Activated B cell treated with CpG ODN at 0.5 μM for 24 hours (primary cell): ENCODE measurements at regions of chr3 and their contacts with region 1.

Region 1: DNA sequence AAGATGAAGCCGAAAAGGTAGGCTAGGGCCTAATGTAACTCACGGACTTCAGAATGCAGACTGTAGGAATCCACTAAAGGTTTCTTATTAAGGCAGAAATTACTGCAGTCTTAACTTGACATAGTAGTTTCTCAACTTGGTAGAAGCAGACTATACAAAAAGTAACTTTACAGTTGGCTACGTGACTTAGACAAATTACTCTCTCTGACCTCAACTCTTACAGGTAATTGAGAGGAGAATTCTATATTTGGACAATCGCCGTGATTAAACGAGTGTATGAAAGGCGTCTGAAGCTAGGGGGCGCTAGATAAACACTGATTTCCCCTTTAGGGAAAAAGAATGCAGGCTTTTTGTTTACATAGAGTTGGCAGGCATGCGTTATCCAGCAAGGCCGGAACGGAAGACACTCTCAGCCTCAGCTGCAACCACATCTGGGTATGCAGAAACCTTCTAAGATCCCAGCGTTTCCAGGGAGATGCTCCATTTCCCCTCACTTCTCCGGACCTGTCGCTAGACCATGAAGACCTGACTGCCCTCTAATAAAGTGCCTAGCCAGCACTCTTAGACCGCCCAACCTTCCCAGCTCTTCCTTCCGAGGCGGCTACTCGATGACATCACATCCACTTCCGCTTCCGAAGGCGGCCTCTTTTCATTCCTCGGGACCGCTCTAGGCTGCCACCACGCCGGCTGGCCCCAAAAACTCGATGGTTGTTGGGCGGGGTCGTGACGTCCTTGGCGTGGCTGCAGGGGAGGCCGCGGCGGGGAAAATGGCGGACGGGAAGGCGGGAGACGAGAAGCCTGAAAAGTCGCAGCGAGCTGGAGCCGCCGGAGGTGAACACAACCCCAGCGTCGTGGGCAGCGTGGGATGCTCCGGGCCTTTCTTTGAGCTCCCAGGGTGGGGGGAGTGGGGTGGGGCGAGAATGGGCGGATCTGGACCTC is at the start of gene PCNP:
- DNase-seq: peak; percentile 97
- ATAC-seq: peak; percentile 85
- H3K4me3 Mint-ChIP-seq: peak within 1 kb of the TSS; percentile 99
- H3K27ac Mint-ChIP-seq: peak within 1 kb of the TSS; percentile 96
- H3K4me1 Mint-ChIP-seq: peaks cover 45% of the 10 kb centered on the region
- H3K27me3 Mint-ChIP-seq: no peaks in the 10 kb centered on the region
- CTCF ChIP-seq: no peak
- total RNA-seq, gene PCNP: 149 TPM in 2 replicates

Region 2: GRCh38 chr3:100260685-100261484 is 1312.8 kb before region 1 on chr3 and contains the start of gene TBC1D23:
- CTCF ChIA-PET with region 1: no interaction called
- POLR2A ChIA-PET with region 1: no interaction called
- intact Hi-C with region 1: loop called (anchors 2 kb)
- DNase-seq: peak; percentile 93
- ATAC-seq: peak; percentile 100
- H3K4me3 Mint-ChIP-seq: peak within 1 kb of the TSS; percentile 93
- H3K27ac Mint-ChIP-seq: peak within 1 kb of the TSS; percentile 96
- H3K4me1 Mint-ChIP-seq: peaks cover 43% of the 10 kb centered on the region
- H3K27me3 Mint-ChIP-seq: no peaks in the 10 kb centered on the region
- CTCF ChIP-seq: no peak
- total RNA-seq, gene TBC1D23: 27.2 and 27.7 TPM in 2 replicates

Region 3: DNA sequence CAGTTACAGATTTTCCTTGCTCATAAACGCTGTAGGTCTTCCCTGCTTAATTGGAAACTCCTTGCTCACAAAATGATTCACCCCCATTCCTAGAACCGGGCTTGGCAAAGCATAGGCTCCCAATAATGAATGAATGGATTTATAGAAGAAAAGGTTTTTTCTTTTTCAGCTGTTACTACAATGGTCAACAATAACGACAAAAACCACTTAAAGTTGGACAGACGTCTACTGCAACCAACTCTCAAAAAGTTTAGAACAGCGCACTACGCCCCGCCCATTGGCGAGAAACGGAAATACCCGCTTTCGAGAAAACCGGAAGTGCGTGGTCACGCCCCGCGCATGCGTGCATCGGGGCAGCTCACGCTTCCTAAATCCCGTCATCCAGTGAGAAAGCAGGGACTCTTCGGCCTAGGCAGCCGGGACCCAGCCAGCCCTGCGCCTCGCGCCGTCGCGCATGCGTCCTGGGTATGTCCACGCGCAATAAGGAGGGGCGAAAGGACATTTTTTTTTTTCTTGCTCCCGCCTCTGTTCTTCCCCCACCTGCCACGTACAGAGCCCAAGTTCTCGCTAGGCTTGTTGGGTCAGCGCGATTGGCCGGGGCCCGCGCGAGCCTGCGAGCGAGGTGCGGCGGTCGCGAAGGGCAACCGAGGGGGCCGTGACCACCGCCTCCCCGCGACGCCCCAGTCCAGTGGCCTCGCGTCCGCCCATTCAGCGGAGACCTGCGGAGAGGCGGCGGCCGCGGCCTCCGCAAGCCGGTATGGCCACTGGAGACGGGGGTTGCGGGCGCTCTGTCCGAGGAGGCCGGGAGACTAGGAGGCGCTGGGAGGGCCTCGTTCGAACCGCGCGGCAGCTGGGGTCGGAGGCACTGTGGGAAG is 864.5 kb before region 1 on chr3 and contains the start of gene TFG:
- CTCF ChIA-PET with region 1: no interaction called
- POLR2A ChIA-PET with region 1: interaction called, 4 read pairs
- intact Hi-C with region 1: loop called (anchors 1 kb)
- DNase-seq: peak; percentile 97
- ATAC-seq: peak; percentile 90
- H3K4me3 Mint-ChIP-seq: peak within 1 kb of the TSS; percentile 88
- H3K27ac Mint-ChIP-seq: peak within 1 kb of the TSS; percentile 92
- H3K4me1 Mint-ChIP-seq: peaks cover 40% of the 10 kb centered on the region
- H3K27me3 Mint-ChIP-seq: peaks cover 17% of the 10 kb centered on the region
- CTCF ChIP-seq: no peak
- total RNA-seq, gene TFG: 42.5 and 44.5 TPM in 2 replicates

Region 4: GRCh38 chr3:101512646-101513418 is 60.9 kb before region 1 on chr3 and contains the start of gene SENP7:
- CTCF ChIA-PET with region 1: no interaction called
- POLR2A ChIA-PET with region 1: interaction called, 31 read pairs
- intact Hi-C with region 1: loop called (anchors 1 kb)
- DNase-seq: peak; percentile 74
- ATAC-seq: peak; percentile 72
- H3K4me3 Mint-ChIP-seq: peak within 1 kb of the TSS; percentile 98
- H3K27ac Mint-ChIP-seq: peak within 1 kb of the TSS; percentile 99
- H3K4me1 Mint-ChIP-seq: peaks cover 35% of the 10 kb centered on the region
- H3K27me3 Mint-ChIP-seq: no peaks in the 10 kb centered on the region
- CTCF ChIP-seq: no peak
- total RNA-seq, gene SENP7: 18.6 and 22.1 TPM in 2 replicates

Region 5: GRCh38 chr3:101635954-101636798 is 62.5 kb after region 1 on chr3:
- CTCF ChIA-PET with region 1: interaction called, 3 read pairs
- POLR2A ChIA-PET with region 1: no interaction called
- intact Hi-C with region 1: loop called (anchors 1 kb)
- DNase-seq: peak; percentile 27
- ATAC-seq: peak; percentile 76
- H3K4me3 Mint-ChIP-seq: no peak overlapping the region
- H3K27ac Mint-ChIP-seq: no peak overlapping the region
- H3K4me1 Mint-ChIP-seq: peaks cover 2% of the 10 kb centered on the region
- H3K27me3 Mint-ChIP-seq: no peaks in the 10 kb centered on the region
- CTCF ChIP-seq: no peak

Region 6: GRCh38 chr3:101724329-101725193 is 150.8 kb after region 1 on chr3 and contains the start of gene CEP97:
- CTCF ChIA-PET with region 1: no interaction called
- POLR2A ChIA-PET with region 1: interaction called, 30 read pairs
- intact Hi-C with region 1: loop called (anchors 1 kb)
- DNase-seq: peak; percentile 78
- ATAC-seq: peak; percentile 92
- H3K4me3 Mint-ChIP-seq: peak within 1 kb of the TSS; percentile 98
- H3K27ac Mint-ChIP-seq: peak within 1 kb of the TSS; percentile 97
- H3K4me1 Mint-ChIP-seq: peaks cover 40% of the 10 kb centered on the region
- H3K27me3 Mint-ChIP-seq: no peaks in the 10 kb centered on the region
- CTCF ChIP-seq: no peak
- total RNA-seq, gene CEP97: 7.3 and 7.9 TPM in 2 replicates